ENCODE measurements at regions of chr3 and their contacts with region 1.

Region 1: GRCh38 chr3:123723522-123724168 is 138.8 kb upstream of the HACD2 start:
- DNase-seq: peak; percentile 71
- H3K4me3 Mint-ChIP-seq: no peak overlapping the region
- H3K27ac Mint-ChIP-seq: no peak overlapping the region
- H3K4me1 Mint-ChIP-seq: no peaks in the 10 kb centered on the region
- H3K27me3 Mint-ChIP-seq: peaks cover 15% of the 10 kb centered on the region

Region 2: DNA sequence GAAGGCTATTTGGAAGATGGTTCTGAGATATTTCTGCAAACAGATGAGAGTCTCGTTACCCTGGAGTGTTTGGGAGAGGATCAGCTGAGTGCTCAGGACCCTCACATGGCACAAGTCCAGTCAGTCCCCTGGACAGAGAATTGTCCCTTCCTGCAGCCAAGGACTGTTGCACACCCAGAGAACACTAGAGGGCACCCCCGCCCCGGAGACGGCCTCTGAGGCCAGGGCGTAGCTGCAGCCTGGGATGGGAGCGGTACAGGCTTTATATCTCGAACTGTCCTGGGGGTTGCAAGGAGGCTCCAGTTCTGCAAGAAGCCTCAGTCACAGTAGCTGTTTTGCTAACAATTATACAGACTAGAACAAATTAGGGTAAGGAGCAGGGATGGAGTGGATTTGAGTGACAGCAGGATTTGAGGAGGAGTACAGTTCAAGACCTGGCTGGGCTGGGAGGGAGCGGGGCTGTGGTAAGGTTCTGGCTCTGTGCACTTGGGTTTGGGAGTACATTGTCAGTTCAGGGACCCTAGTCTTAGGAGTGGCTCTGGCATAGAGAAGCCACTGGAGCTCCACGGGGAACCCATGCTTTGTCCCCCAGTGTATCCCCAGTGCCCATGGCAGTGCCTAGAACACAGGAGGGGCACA is 71.2 kb before region 1 on chr3:
- CTCF ChIA-PET with region 1: interaction called, 55 read pairs
- intact Hi-C with region 1: loop called (anchors 1 kb)
- DNase-seq: peak; percentile 63
- H3K4me3 Mint-ChIP-seq: no peak overlapping the region
- H3K27ac Mint-ChIP-seq: no peak overlapping the region
- H3K4me1 Mint-ChIP-seq: no peaks in the 10 kb centered on the region
- H3K27me3 Mint-ChIP-seq: peaks cover 2% of the 10 kb centered on the region

Region 3: DNA sequence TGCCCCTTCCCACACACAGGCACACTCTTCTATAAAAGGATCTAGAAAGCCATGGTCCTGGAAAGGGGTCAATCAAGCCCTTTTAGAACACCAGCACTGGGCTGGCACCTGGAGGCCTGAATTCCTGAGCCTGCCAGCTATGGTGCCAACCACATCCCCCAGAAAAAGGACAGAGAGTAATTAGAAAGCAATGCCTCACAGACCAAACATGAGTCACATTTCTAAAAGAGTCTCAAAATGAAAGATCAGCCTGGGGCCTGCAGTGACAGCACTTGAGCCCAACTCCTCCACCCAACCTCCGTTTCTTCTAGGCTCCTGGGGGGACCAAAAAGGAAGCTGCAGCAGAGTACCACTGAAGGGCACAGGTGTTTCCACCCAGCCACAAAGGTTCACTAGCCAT is 146.4 kb after region 1 on chr3:
- CTCF ChIA-PET with region 1: no interaction called
- intact Hi-C with region 1: no loop called
- DNase-seq: no peak
- H3K4me3 Mint-ChIP-seq: no peak overlapping the region
- H3K27ac Mint-ChIP-seq: no peak overlapping the region
- H3K4me1 Mint-ChIP-seq: no peaks in the 10 kb centered on the region
- H3K27me3 Mint-ChIP-seq: peaks cover 6% of the 10 kb centered on the region

Region 4: DNA sequence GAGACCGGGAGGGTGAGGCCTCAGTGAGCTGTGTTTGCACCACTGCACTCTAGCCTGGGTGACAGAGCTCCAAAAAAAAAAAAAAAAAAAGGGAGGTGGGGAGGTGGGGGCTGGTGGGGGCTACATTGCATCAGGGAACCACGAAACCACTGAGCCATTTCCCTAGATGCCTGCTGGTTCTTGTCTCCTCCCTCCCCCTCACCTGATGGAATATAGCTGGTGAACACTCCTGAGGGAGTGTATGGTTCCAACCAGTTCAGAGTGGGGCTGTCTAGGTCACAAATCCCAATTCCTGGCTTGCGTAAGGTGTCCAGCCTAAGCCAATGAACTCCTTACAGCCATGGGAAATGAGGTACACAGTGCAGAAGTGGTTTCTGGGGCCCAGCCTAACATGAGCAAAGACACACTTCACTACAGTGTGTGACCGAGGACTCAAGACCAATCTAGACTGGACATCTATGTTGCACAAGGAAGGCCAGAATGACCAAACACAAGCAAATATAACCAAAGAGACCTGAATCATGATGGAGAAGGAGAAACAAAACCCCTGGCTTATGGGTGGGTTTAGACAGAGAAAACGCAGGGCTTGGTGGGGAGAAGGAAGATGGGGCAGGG is 1910.8 kb after region 1 on chr3:
- CTCF ChIA-PET with region 1: no interaction called
- intact Hi-C with region 1: no loop called
- DNase-seq: no peak
- H3K4me3 Mint-ChIP-seq: no peak overlapping the region
- H3K27ac Mint-ChIP-seq: no peak overlapping the region
- H3K4me1 Mint-ChIP-seq: no peaks in the 10 kb centered on the region
- H3K27me3 Mint-ChIP-seq: peaks cover 13% of the 10 kb centered on the region

Measured in activated naive CD4-positive, alpha-beta T cell treated with anti-CD3 and anti-CD28 coated beads for 36 hours (primary cell).